BJ (cell line): ENCODE measurements at regions of chr10 and their contacts with region 1.

Region 1: GRCh38 chr10:71569775-71570588 is 149.6 kb downstream of the C10orf105 start:
- DNase-seq: no peak
- H3K4me3 ChIP-seq: no peak overlapping the region
- H3K27me3 ChIP-seq: peaks cover 6% of the 10 kb centered on the region; the same call in 1 of the 2 replicates
- CTCF ChIP-seq: peak; percentile 85

Region 2: DNA sequence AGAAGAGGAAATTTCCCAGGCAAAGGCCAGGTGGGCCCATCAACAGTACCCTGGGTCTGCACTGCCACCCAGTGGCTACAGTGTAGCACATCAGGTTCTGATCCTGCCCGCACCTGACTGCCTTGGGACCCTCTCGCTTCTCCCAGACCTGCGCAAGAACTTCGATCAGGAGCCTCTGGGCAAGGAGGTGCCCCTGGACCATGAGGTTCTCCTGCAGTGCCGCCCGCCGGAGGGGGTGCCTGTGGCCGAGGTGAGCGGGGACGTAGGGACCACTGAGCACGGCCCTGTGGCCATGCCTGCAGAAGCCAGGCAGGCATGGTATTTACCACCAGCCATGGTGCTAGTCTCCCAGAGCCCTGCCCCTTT is 284.8 kb before region 1 on chr10:
- CTCF ChIA-PET with region 1: no interaction called
- POLR2A ChIA-PET with region 1: no interaction called
- DNase-seq: no peak
- H3K4me3 ChIP-seq: no peak overlapping the region
- H3K27me3 ChIP-seq: no peaks in the 10 kb centered on the region
- CTCF ChIP-seq: peak; percentile 67

Region 3: DNA sequence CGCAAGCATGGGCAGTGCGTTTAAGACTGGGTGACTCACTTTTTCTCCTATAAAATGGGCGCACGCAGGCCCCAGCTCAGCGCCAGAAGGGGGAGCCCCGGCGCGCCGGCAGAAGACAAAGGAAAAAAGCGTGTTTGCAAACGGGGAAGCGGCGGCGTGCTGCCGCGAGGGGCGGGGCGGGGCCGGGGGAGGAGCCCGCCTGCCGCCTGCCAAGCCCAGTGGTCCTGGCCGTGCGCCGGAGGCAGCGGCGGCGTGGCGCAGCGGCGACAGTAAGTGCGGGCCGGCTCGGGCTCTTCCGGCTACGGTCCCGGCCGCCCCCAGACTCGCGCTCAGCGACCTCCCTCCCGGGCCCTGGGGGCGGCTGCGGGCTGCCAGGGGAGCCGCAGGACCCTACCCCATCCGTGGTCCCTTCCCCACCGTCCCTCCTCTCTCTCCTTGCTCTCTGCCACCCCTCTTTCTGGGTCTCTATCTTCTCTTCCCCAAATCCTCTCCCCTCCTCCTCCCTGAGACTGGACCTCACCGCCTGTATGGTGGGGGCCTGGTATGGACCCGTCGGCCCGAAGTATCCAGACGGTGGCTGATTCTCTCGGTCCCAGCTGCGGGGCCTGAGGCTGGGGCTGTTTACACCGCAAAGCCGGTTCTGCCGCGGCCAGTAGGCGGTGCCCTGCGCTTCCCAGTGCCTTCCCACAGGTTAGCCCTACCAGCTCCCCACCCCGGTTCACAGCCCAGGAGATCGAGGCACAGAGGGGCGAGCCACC is 250.8 kb before region 1 on chr10 and contains the start of gene SLC29A3:
- CTCF ChIA-PET with region 1: interaction called, 106 read pairs
- POLR2A ChIA-PET with region 1: no interaction called
- DNase-seq: peak; percentile 20
- H3K4me3 ChIP-seq: peak within 1 kb of the TSS; percentile 81
- H3K27me3 ChIP-seq: no peaks in the 10 kb centered on the region
- CTCF ChIP-seq: peak; percentile 89
- polyA plus RNA-seq, gene SLC29A3: 4.2 and 7.2 TPM in 2 replicates

Region 4: GRCh38 chr10:71547876-71548846 is 21.8 kb before region 1 on chr10:
- CTCF ChIA-PET with region 1: interaction called, 20 read pairs
- POLR2A ChIA-PET with region 1: no interaction called
- DNase-seq: peak; percentile 2
- H3K4me3 ChIP-seq: no peak overlapping the region
- H3K27me3 ChIP-seq: peaks cover 6% of the 10 kb centered on the region
- CTCF ChIP-seq: peak; percentile 26; the same call in 1 of the 2 replicates

Region 5: GRCh38 chr10:71582019-71582418 is 12.0 kb after region 1 on chr10:
- CTCF ChIA-PET with region 1: interaction called, 45 read pairs
- POLR2A ChIA-PET with region 1: no interaction called
- DNase-seq: no peak
- H3K4me3 ChIP-seq: no peak overlapping the region
- H3K27me3 ChIP-seq: peaks cover 9% of the 10 kb centered on the region
- CTCF ChIP-seq: no peak

Region 6: GRCh38 chr10:71623098-71623985 is 53.4 kb after region 1 on chr10:
- CTCF ChIA-PET with region 1: interaction called, 12 read pairs
- POLR2A ChIA-PET with region 1: no interaction called
- DNase-seq: no peak
- H3K4me3 ChIP-seq: no peak overlapping the region
- H3K27me3 ChIP-seq: peaks cover 5% of the 10 kb centered on the region
- CTCF ChIP-seq: peak; percentile 49; the same call in 1 of the 2 replicates